ENCODE measurements at regions of chr10 and their contacts with region 1.

Region 1: GRCh38 chr10:89701238-89702120 is at the start of gene KIF20B:
- DNase-seq: peak; percentile 84 to 96 (median 94)
- ATAC-seq: peak; percentile 99
- H3K4me3 ChIP-seq: peak within 1 kb of the TSS; percentile 92
- H3K4me3 Mint-ChIP-seq: peak within 1 kb of the TSS; percentile 94 to 100 (median 98)
- H3K27ac ChIP-seq: peak within 1 kb of the TSS; percentile 76
- H3K27ac Mint-ChIP-seq: peak within 1 kb of the TSS; percentile 93 to 99 (median 97)
- H3K4me1 ChIP-seq: peaks cover 8 to 11% of the 10 kb centered on the region in 2 donors
- H3K4me1 Mint-ChIP-seq: peaks cover 22 to 51% (median 41%) of the 10 kb centered on the region in 7 donors
- H3K27me3 ChIP-seq: no peaks in the 10 kb centered on the region
- H3K27me3 Mint-ChIP-seq: no peaks in the 10 kb centered on the region
- total RNA-seq, gene KIF20B: 14.5 to 49.0 (median 19.3) TPM

Region 2: DNA sequence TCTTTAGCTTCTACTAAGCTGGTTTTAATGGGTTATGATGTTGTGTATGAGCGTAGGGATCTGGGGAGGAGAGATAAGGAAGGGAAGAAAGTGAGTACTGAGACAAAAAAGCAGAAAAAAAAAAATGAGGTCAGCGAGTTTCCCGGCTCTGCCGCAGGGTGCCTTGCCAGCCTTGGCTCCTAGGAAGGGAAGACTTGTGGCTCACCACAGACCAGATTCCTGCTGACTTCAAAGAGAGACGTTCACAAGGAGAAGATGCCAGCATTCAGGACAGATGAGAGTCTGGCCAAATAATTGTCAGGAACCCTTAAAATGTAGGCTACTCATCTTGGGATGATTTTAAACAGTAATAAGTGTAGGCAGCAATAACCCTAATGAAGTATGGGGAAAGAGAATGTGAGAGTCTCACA is 722.3 kb before region 1 on chr10:
- CTCF ChIA-PET with region 1: no interaction called
- POLR2A ChIA-PET with region 1: no interaction called
- intact Hi-C with region 1: loop called in 1 of 2 experiments (anchors 5 kb)
- DNase-seq: no peak
- ATAC-seq: no peak
- H3K4me3 ChIP-seq: no peak overlapping the region
- H3K4me3 Mint-ChIP-seq: no peak overlapping the region
- H3K27ac ChIP-seq: no peak overlapping the region
- H3K27ac Mint-ChIP-seq: peak overlapping the region in 2 of 9 donors; percentile 32 to 33
- H3K4me1 ChIP-seq: peaks cover 7 to 12% of the 10 kb centered on the region in 2 donors
- H3K4me1 Mint-ChIP-seq: peaks cover 6 to 29% (median 18%) of the 10 kb centered on the region in 7 donors
- H3K27me3 ChIP-seq: no peaks in the 10 kb centered on the region
- H3K27me3 Mint-ChIP-seq: peaks cover 0 to 3% (median 0%) of the 10 kb centered on the region in 5 donors

Region 3: DNA sequence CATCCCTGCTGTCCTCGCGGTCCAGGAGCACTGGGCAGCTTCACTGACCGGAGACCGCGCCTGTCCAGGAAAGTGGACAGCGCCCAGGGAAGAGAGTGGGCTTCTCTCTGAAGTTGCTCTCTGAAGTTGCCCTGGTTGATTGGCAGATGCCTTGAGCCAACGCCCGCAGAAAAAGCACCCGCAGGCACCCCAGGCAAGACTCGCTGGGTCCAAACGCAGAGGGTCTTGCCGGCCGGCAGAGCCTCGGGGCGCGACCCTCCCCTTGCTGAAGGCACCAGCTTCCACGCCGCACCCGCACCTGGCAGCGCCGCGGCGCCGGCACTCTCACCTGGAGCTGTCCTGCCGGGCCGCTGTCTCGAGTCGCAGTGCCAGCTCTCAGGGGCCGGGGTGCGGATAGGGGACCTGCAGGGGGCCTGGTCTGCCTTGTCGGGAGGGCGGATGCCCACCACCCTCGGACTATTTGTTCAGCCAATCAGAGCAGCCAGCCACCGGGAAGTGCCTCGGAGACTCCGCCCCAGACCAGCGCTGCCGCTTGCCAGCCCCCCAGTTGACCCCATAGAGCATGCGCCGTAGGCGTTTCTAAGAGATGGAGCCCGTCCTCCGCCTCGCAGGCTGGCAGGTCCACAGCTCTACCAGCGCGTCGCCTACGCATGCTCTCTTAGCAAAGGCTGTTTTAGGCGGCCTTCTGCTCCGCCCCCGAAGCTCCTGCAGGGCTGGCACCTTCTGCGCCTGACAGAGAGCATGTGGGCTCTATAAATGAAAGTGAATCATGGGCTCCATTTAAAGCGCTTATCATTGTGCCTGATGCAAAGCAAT is 449.9 kb before region 1 on chr10 and contains the start of gene LIPA:
- CTCF ChIA-PET with region 1: no interaction called
- POLR2A ChIA-PET with region 1: interaction called, 4 read pairs
- intact Hi-C with region 1: loop called in 1 of 2 experiments (anchors 1 kb)
- DNase-seq: peak; percentile 78 to 97 (median 94)
- ATAC-seq: peak; percentile 97
- H3K4me3 ChIP-seq: peak within 1 kb of the TSS; percentile 80
- H3K4me3 Mint-ChIP-seq: peak within 1 kb of the TSS; percentile 82 to 91 (median 90)
- H3K27ac ChIP-seq: peak within 1 kb of the TSS; percentile 76
- H3K27ac Mint-ChIP-seq: peak within 1 kb of the TSS; percentile 38 to 90 (median 84)
- H3K4me1 ChIP-seq: peaks cover 8 to 9% of the 10 kb centered on the region in 2 donors
- H3K4me1 Mint-ChIP-seq: peaks cover 17 to 32% (median 22%) of the 10 kb centered on the region in 7 donors
- H3K27me3 ChIP-seq: no peaks in the 10 kb centered on the region
- H3K27me3 Mint-ChIP-seq: peaks cover 0 to 9% (median 0%) of the 10 kb centered on the region in 5 donors
- total RNA-seq, gene LIPA: 19.9 to 49.9 (median 48.3) TPM

Region 4: DNA sequence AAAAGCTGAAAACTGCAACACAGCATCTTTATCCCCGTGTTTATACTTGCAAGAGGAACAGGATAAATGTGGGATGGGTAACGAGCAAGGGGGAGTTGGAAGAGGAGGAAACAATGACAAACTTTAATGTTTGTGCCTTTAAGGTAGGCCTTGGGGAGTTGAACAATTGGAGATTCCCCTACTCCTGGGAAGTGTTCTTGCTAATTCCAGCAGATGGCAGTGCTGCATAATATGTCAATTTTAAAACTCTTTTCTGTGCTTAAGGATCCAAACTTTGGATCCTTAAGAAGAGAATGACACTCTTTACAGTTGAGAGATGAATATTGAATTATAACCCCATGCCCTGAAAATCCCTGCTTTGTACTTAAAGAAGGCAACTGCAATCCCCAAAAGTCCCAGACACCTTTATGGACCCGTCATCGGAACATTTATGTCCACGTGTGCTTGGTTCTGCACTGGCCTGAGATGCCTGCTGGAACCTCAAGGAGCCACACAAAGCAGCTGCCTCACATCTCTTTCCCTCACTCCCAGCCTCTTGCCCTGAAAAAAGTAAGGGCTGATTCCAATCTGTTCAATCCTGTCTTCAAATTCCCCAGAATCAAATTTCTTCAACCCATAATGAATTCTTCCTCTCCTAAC is 275.1 kb before region 1 on chr10:
- CTCF ChIA-PET with region 1: no interaction called
- POLR2A ChIA-PET with region 1: no interaction called
- intact Hi-C with region 1: loop called in 1 of 2 experiments (anchors 1 kb)
- DNase-seq: peak in 4 of 9 donors; percentile 23 to 38 (median 28)
- ATAC-seq: peak; percentile 81
- H3K4me3 ChIP-seq: no peak overlapping the region
- H3K4me3 Mint-ChIP-seq: no peak overlapping the region
- H3K27ac ChIP-seq: no peak overlapping the region
- H3K27ac Mint-ChIP-seq: no peak overlapping the region
- H3K4me1 ChIP-seq: no peaks in the 10 kb centered on the region
- H3K4me1 Mint-ChIP-seq: peaks cover under 1 to 8% (median 3%) of the 10 kb centered on the region in 7 donors
- H3K27me3 ChIP-seq: no peaks in the 10 kb centered on the region
- H3K27me3 Mint-ChIP-seq: peaks cover 0 to 16% (median 4%) of the 10 kb centered on the region in 5 donors

Region 5: DNA sequence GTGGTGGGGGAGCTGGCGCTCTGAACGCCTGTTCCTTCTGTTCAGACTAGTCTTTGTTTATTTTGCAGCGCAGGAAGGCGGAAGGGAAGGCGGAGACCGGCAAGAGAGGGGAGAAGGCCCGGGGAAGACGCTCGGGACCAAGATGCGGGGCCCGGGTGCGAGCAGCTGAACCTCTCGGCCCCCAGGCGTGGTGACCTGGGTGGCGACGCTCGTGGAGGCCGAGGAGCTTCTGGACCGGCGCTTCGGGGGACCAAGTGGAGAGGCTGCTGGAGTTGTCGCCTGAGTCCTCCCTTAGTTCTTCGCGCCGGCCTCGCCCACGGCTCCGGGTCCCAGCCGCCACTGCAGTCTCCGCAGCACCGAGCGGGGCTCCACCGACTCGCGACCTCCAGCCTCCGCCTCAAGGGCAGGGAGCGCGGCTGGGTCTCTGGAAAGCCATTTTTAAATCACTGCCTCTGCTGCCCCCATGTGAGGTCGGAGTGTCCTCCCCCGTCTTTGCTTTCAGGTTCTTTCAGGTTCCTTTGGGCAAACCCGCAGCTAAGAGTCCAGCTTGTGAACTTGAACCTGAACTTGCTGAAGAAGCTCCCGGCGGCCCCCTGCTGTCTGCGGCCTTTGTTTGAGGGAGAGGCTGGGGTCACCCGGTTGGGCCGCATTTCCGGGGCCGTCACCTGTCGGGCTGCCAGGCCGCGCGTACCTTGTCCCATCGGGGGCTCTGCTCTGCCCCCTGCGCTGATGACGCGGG is 135.8 kb after region 1 on chr10:
- CTCF ChIA-PET with region 1: no interaction called
- POLR2A ChIA-PET with region 1: interaction called, 3 read pairs
- intact Hi-C with region 1: loop called in 1 of 2 experiments (anchors 1 kb)
- DNase-seq: peak; percentile 14 to 48 (median 34)
- ATAC-seq: peak; percentile 70
- H3K4me3 ChIP-seq: peak overlapping the region; percentile 57
- H3K4me3 Mint-ChIP-seq: peak overlapping the region; percentile 87 to 94 (median 91)
- H3K27ac ChIP-seq: peak overlapping the region; percentile 65
- H3K27ac Mint-ChIP-seq: peak overlapping the region; percentile 59 to 92 (median 85)
- H3K4me1 ChIP-seq: peaks cover 0 to 7% of the 10 kb centered on the region in 2 donors
- H3K4me1 Mint-ChIP-seq: peaks cover 0 to 30% (median 22%) of the 10 kb centered on the region in 7 donors
- H3K27me3 ChIP-seq: no peaks in the 10 kb centered on the region
- H3K27me3 Mint-ChIP-seq: peaks cover 0 to 36% (median 5%) of the 10 kb centered on the region in 5 donors

Region 6: DNA sequence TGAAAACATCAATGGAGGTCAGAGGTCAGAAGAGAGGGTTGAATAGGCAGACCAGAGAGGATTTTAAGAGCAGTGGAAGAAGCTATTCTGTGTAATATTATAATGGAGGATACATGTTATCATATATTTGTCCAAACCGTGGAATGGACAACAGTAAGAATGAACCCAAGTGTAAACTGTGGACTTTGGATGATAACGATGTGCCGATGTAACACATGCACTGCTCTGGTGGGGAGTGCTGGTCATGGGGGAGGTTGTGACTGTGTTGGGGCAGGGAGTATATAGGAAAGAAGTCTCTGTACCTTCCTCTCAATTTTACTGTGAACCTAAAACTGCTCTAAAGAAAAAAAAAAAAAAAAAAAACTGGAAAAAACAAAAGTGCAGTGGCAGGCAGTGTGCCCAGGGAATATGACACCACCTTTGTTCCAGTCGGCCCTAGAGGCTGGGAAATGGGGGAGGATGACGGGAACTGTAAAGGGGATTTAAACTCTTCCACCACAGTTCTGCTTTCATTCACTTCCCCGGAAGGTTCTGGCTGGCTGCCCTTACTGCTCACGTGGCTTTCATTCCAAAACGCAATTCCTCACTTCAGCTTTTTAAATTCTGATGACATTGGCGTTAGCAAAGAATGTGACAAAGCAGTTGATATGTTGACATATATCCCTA is 1333.1 kb after region 1 on chr10:
- CTCF ChIA-PET with region 1: no interaction called
- POLR2A ChIA-PET with region 1: no interaction called
- intact Hi-C with region 1: loop called in 1 of 2 experiments (anchors 10 kb)
- DNase-seq: no peak
- ATAC-seq: no peak
- H3K4me3 ChIP-seq: no peak overlapping the region
- H3K4me3 Mint-ChIP-seq: peak overlapping the region in 9 of 10 donors; percentile 43 to 88 (median 64)
- H3K27ac ChIP-seq: peak overlapping the region; percentile 57
- H3K27ac Mint-ChIP-seq: peak overlapping the region; percentile 86 to 97 (median 89)
- H3K4me1 ChIP-seq: peaks cover 14 to 17% of the 10 kb centered on the region in 2 donors
- H3K4me1 Mint-ChIP-seq: peaks cover 14 to 33% (median 30%) of the 10 kb centered on the region in 7 donors
- H3K27me3 ChIP-seq: no peaks in the 10 kb centered on the region
- H3K27me3 Mint-ChIP-seq: peaks cover 0 to 19% (median 0%) of the 10 kb centered on the region in 5 donors